H1 (cell line): ENCODE measurements at regions of chr13 and their contacts with region 1.

Region 1: GRCh38 chr13:96314984-96315383 is 225.1 kb downstream of the HS6ST3 start:
- DNase-seq: no peak
- H3K4me3 ChIP-seq: no peak overlapping the region
- H3K27ac ChIP-seq: no peak overlapping the region
- H3K4me1 ChIP-seq: no peaks in the 10 kb centered on the region
- H3K27me3 ChIP-seq: no peaks in the 10 kb centered on the region
- CTCF ChIP-seq: no peak
- EP300 ChIP-seq: no peak
- POLR2A ChIP-seq: no peak
- RAD21 ChIP-seq: no peak

Region 2: GRCh38 chr13:96193728-96194310 is 121.2 kb before region 1 on chr13:
- CTCF ChIA-PET with region 1: no interaction called
- POLR2A ChIA-PET with region 1: no interaction called
- DNase-seq: no peak
- H3K4me3 ChIP-seq: no peak overlapping the region
- H3K27ac ChIP-seq: no peak overlapping the region
- H3K4me1 ChIP-seq: no peaks in the 10 kb centered on the region
- H3K27me3 ChIP-seq: no peaks in the 10 kb centered on the region
- CTCF ChIP-seq: no peak
- EP300 ChIP-seq: no peak
- POLR2A ChIP-seq: no peak
- RAD21 ChIP-seq: no peak

Region 3: DNA sequence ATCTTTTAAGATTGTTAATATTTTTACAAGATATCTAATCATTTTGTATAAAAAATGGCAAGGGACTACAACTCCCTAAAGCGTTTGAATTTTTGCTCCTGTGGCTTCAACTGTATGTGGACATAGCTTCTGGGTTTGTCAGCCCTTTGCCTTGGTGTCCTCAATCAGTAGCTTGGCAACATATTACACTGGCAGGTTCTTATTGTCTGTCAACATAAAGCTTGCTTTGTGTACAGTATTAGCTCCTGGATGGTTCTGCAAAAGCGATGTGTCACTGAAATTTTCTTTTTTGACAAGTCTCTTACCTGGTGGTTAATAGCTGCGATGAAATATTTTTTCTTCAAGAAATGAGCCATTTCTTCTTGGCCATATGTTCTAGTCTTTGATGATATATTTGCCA is 35.1 kb before region 1 on chr13:
- CTCF ChIA-PET with region 1: no interaction called
- POLR2A ChIA-PET with region 1: no interaction called
- DNase-seq: no peak
- H3K4me3 ChIP-seq: no peak overlapping the region
- H3K27ac ChIP-seq: no peak overlapping the region
- H3K4me1 ChIP-seq: no peaks in the 10 kb centered on the region
- H3K27me3 ChIP-seq: no peaks in the 10 kb centered on the region
- CTCF ChIP-seq: no peak
- EP300 ChIP-seq: no peak
- POLR2A ChIP-seq: no peak
- RAD21 ChIP-seq: no peak

Region 4: DNA sequence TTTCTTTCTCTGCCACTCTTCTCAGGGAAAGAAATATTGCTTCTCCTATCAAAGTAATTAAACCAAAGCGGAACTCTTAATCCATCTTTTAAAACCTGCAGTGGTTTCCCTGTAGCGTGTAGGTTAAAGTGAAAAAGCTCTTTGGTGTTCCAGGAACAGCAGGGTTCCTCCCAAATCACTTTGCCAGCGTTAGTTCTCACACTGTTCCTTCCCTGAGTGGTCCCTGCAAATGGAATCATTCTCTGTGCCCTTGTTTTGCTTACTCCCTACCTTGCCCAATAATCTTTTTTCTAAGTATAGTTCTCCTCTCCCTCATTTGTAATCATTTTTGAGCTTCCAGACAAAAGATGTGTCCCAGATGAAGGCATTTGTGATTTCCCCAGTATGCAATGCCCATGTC is 17.6 kb before region 1 on chr13:
- CTCF ChIA-PET with region 1: interaction called, 11 read pairs
- POLR2A ChIA-PET with region 1: interaction called, 3 read pairs
- DNase-seq: no peak
- H3K4me3 ChIP-seq: no peak overlapping the region
- H3K27ac ChIP-seq: no peak overlapping the region
- H3K4me1 ChIP-seq: peaks cover 3 to 11% (median 9%) of the 10 kb centered on the region in 4 experiments; a peak in 6 of 7 replicates
- H3K27me3 ChIP-seq: peaks cover 0 to 1% (median 0%) of the 10 kb centered on the region in 4 experiments; a peak in 1 of 7 replicates
- CTCF ChIP-seq: no peak
- EP300 ChIP-seq: no peak
- POLR2A ChIP-seq: no peak
- RAD21 ChIP-seq: no peak